Thyroid gland (tissue), 4 donors: ENCODE measurements at regions of chr9 and their contacts with region 1.

Region 1: DNA sequence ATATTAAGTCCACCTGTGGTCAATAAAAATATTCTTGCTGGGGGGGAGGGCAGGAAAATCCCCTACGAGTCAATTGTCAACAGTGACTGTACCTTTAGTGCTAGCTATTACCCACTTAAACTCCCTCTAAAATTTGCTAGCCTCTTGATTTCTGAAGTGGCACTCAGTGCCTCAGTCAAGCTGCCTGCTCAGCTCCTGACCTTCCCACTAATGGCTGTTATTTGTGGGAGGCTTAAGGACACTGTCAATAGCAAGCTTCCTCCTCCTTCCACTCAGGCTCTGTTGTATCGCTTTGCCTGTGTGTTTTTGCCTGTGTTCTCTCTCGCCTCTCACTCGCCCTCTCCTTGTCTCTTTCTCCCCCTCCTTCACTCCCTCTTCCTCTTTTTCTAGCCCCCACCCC is 140.8 kb downstream of the BNC2 start:
- DNase-seq: peak; percentile 65 to 71
- H3K4me3 ChIP-seq: no peak overlapping the region
- H3K27ac ChIP-seq: no peak overlapping the region
- H3K4me1 ChIP-seq: peaks cover 17 to 18% of the 10 kb centered on the region in 2 donors
- H3K27me3 ChIP-seq: no peaks in the 10 kb centered on the region
- CTCF ChIP-seq: no peak
- POLR2A ChIP-seq: no peak

Region 2: GRCh38 chr9:16626577-16627131 is 103.0 kb before region 1 on chr9:
- intact Hi-C with region 1: loop called (anchors 10 kb)
- DNase-seq: peak; percentile 61 to 73
- H3K4me3 ChIP-seq: no peak overlapping the region
- H3K27ac ChIP-seq: peak overlapping the region in 2 of 3 donors; percentile 40 to 61
- H3K4me1 ChIP-seq: peaks cover 12 to 40% of the 10 kb centered on the region in 2 donors
- H3K27me3 ChIP-seq: no peaks in the 10 kb centered on the region
- CTCF ChIP-seq: no peak
- POLR2A ChIP-seq: no peak

Region 3: DNA sequence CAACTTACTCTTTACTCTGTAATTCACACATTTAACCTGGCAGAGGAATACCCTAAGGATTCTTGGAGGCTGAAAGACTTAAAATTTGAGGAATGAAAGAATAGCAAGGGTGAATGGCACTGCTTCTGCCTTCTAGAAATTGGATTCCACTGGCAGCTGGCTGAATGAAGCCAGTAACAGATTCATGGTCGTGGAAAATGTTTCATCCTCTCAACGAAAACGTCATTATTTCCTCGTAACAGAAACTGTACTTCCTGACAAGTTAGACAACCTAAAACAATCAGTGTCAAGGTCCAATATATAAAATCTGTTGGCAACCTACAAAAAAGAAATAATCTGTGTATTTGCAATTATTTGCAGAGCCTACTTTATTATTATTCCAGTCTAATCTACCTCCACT is 101.2 kb after region 1 on chr9:
- intact Hi-C with region 1: loop called (anchors 10 kb)
- DNase-seq: no peak
- H3K4me3 ChIP-seq: no peak overlapping the region
- H3K27ac ChIP-seq: no peak overlapping the region
- H3K4me1 ChIP-seq: peaks cover 7 to 14% of the 10 kb centered on the region in 2 donors
- H3K27me3 ChIP-seq: peaks cover 6% of the 10 kb centered on the region
- CTCF ChIP-seq: no peak
- POLR2A ChIP-seq: no peak

Region 4: DNA sequence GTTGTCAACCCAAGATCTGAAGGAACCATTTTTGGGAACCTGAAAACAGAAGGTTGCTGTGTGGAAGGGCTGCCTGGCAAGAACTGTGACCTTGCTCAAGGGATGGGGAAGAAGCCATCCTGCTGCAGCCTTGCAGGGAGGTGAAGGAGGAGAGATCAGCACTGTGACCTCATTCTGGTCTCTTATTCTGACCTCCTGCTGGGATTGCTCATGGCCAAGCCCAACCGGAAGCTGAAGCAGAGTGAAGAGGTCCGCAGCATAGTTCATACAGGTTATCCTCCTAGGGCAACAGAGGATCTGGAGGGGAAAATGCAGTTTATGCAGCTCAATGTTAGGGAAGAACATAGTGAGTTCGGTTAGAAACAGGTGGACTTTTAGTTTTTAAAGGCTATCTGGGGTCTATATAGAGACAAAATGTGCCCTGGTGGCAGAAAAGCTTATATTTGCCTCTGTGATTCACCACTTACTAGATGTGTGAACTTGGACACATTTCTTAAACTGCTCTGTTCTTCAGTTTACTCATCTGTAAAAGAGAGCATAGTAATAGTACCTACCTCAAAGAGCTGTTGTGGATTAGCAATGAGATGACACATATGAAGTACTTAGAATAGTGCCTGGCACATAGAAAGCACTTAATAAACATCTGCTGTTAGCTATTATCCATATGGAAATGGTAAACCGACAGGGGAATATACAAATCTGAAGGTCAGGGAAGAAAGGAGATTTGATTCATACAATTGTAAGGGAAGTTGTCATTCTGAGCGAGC is 198.7 kb after region 1 on chr9:
- intact Hi-C with region 1: no loop called
- DNase-seq: no peak
- H3K4me3 ChIP-seq: no peak overlapping the region
- H3K27ac ChIP-seq: no peak overlapping the region
- H3K4me1 ChIP-seq: no peaks in the 10 kb centered on the region
- H3K27me3 ChIP-seq: no peaks in the 10 kb centered on the region
- CTCF ChIP-seq: no peak
- POLR2A ChIP-seq: no peak